Calu3 (cell line): ENCODE measurements at regions of chr17 and their contacts with region 1.

Region 1: GRCh38 chr17:82687375-82687861 is 11.1 kb downstream of the RAB40B start:
- DNase-seq: peak; percentile 76
- H3K4me3 Mint-ChIP-seq: peak overlapping the region; percentile 42
- H3K27ac Mint-ChIP-seq: peak overlapping the region; percentile 96
- H3K4me1 Mint-ChIP-seq: peaks cover 49% of the 10 kb centered on the region
- H3K27me3 Mint-ChIP-seq: no peaks in the 10 kb centered on the region
- CTCF ChIP-seq: no peak

Region 2: DNA sequence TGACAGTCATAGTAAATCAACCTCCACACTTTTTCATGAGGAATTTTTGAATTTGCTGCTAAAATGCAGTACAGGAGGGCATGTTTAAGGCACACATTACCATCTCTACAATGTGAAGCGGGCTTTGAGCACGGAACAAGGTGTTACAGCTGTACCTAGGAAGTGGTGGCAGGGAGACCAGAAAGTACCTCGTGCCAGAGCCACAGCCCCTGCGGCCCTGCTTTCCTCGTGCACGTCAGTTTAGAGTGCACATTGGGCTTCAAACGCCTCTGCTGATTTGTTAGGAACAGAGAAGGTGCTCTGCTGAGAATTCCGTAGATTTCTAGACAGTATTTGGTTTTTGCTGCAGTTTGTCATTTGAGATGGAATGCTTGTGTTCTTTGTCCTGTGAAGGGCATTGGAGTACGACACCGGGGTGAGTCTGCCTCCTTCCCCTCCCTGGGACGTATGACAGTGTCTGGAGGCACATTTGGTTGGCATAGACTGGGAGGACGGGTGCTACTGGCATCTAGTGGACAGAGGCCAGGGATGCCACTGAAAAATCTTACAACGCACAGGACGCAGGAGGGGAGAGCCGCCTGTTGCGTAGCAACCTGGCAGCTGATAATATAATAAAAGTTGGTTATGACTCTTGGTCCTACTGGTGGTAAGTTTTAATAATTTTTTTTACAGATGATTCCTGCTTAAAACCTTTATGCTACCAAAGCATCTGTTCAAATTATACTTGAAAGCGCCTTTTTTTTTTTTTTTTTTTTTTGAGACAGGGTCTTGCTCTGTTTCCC is 158.7 kb before region 1 on chr17:
- CTCF ChIA-PET with region 1: no interaction called
- intact Hi-C with region 1: no loop called
- DNase-seq: peak; percentile 62
- H3K4me3 Mint-ChIP-seq: no peak overlapping the region
- H3K27ac Mint-ChIP-seq: peak overlapping the region; percentile 13
- H3K4me1 Mint-ChIP-seq: peaks cover 48% of the 10 kb centered on the region
- H3K27me3 Mint-ChIP-seq: no peaks in the 10 kb centered on the region
- CTCF ChIP-seq: no peak

Region 3: DNA sequence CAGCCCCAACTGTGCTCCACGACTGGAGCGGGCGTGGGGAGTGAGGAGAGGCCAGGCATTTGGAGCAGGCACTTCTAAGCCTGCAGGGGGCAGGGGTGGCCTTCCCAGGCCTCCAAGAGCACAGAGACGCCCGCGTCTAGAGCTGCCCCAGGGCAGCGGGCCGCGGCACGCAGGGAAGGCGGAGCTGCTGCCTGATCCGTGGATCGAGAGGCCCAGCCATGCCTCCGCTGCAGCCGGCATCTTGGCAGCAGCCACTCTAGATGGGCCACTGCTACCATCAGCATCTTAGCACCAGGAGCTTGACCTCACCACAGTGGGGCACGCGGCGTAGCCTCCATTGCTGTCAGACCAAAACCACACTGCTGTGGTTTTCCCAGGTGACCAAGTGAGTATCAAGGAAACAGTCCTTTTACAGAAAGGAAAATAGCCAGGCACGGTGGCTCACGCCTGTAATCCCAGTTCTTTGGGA is 18.8 kb before region 1 on chr17:
- CTCF ChIA-PET with region 1: interaction called, 14 read pairs
- intact Hi-C with region 1: no loop called
- DNase-seq: peak; percentile 78
- H3K4me3 Mint-ChIP-seq: peak overlapping the region; percentile 53
- H3K27ac Mint-ChIP-seq: peak overlapping the region; percentile 54
- H3K4me1 Mint-ChIP-seq: peaks cover 17% of the 10 kb centered on the region
- H3K27me3 Mint-ChIP-seq: no peaks in the 10 kb centered on the region
- CTCF ChIP-seq: peak; percentile 50

Region 4: DNA sequence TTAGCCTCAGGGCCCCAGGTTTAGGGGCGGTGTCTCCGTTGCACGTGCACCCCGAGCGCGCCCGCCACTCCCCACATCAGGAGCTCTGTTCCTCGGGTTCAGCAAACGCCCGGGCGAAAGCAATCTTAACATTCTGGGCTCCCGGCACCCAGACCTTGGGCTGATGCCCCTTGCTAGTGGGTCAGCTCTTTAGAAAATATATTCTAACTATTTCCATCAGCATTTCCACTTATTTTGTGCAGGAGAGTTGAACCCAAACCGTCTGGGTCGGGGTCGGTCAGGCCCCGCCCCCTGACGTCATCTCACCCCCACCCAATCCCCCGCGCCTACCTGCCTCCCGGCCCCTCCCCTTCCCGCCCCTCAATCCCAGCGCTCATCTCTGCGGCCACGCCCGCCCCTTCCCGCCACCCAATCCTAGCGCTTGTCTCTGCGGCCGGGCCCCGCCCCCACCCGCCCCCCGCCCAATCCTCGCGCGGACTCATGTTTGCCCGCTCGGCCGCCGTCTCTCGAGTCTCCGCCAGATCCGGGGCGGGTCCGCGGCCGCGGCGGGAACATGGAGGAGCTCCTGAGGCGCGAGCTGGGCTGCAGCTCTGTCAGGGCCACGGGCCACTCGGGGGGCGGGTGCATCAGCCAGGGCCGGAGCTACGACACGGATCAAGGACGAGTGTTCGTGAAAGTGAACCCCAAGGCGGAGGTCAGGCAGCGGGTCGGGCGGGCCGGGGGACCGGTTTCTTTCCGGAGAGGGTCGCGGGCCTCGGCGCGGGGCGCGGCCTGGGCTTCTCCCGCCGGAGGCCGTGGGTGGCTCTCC is 29.0 kb after region 1 on chr17 and contains the start of gene FN3KRP:
- CTCF ChIA-PET with region 1: interaction called, 12 read pairs
- intact Hi-C with region 1: no loop called
- DNase-seq: peak; percentile 89
- H3K4me3 Mint-ChIP-seq: peak within 1 kb of the TSS; percentile 58
- H3K27ac Mint-ChIP-seq: peak within 1 kb of the TSS; percentile 66
- H3K4me1 Mint-ChIP-seq: peaks cover 11% of the 10 kb centered on the region
- H3K27me3 Mint-ChIP-seq: no peaks in the 10 kb centered on the region
- CTCF ChIP-seq: no peak
- total RNA-seq, gene FN3KRP: 44.2 and 49.9 TPM in 2 replicates